Left ventricle myocardium inferior (tissue), 1 donor: ENCODE measurements at regions of chr9 and their contacts with region 1.

Region 1: GRCh38 chr9:18208154-18209059 is 265.5 kb upstream of the ADAMTSL1 start:
- DNase-seq: no peak
- H3K4me3 ChIP-seq: no peak overlapping the region
- H3K27ac ChIP-seq: no peak overlapping the region
- H3K4me1 ChIP-seq: peaks cover 4% of the 10 kb centered on the region
- H3K27me3 ChIP-seq: no peaks in the 10 kb centered on the region
- CTCF ChIP-seq: peak; percentile 64

Region 2: GRCh38 chr9:17528859-17529258 is 679.5 kb before region 1 on chr9:
- intact Hi-C with region 1: loop called (anchors 5 kb)
- DNase-seq: no peak
- H3K4me3 ChIP-seq: no peak overlapping the region
- H3K27ac ChIP-seq: no peak overlapping the region
- H3K4me1 ChIP-seq: no peaks in the 10 kb centered on the region
- H3K27me3 ChIP-seq: peaks cover 12% of the 10 kb centered on the region
- CTCF ChIP-seq: peak; percentile 40

Region 3: DNA sequence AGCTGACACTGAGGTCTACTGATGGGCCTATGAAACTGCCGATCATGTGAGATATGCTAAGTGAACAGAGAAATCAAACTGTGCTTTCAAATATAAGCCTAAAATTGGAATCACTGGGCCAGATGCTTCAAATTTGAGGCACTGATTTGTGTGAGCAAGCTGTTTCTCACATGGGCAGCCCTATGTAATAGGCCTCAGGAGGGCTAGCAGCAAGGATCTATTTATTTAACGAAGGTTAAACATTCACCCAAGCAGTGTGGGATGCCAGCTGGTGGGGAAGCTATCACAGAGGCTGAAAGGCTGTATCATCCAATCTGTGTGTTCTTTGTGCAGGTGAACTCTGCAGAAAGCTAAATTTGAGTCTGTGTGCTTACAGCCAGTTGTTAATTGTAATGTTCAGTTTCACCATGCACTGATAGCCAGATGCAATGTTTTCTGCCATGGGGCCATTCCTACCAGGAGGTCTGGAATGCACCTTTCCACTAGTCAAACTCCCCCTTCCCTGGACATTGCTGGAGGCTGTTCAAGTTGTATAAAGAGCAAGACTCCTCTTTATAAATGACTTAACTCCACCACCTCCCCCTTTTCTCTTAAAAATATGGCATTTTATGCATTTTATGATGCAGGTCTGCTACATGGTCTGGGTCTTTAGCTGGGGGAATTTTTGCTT is 400.7 kb before region 1 on chr9:
- intact Hi-C with region 1: loop called (anchors 5 kb)
- DNase-seq: no peak
- H3K4me3 ChIP-seq: no peak overlapping the region
- H3K27ac ChIP-seq: no peak overlapping the region
- H3K4me1 ChIP-seq: no peaks in the 10 kb centered on the region
- H3K27me3 ChIP-seq: peaks cover 55% of the 10 kb centered on the region
- CTCF ChIP-seq: no peak

Region 4: DNA sequence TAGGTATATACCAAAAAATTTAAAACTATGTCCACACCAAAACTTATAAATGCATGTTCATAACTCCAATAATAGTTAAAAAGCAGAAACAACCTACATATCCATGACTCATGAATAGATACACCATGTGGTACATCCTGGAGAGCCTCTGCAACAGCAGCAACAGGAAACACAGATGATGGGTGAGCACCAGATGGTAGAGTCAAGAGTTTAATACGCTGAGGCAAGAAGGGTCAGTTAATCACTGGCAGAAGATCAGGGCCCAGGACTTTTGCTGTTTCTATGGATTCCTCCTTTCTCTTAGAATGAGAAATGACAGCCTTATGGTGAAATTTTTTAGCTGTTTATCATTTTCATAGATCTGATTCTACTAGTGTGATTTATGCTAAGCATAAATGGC is 86.2 kb before region 1 on chr9:
- intact Hi-C with region 1: no loop called
- DNase-seq: no peak
- H3K4me3 ChIP-seq: no peak overlapping the region
- H3K27ac ChIP-seq: no peak overlapping the region
- H3K4me1 ChIP-seq: no peaks in the 10 kb centered on the region
- H3K27me3 ChIP-seq: peaks cover 9% of the 10 kb centered on the region
- CTCF ChIP-seq: no peak